Mammary epithelial cell (primary cell): ENCODE measurements at regions of chr15 and their contacts with region 1.

Region 1: DNA sequence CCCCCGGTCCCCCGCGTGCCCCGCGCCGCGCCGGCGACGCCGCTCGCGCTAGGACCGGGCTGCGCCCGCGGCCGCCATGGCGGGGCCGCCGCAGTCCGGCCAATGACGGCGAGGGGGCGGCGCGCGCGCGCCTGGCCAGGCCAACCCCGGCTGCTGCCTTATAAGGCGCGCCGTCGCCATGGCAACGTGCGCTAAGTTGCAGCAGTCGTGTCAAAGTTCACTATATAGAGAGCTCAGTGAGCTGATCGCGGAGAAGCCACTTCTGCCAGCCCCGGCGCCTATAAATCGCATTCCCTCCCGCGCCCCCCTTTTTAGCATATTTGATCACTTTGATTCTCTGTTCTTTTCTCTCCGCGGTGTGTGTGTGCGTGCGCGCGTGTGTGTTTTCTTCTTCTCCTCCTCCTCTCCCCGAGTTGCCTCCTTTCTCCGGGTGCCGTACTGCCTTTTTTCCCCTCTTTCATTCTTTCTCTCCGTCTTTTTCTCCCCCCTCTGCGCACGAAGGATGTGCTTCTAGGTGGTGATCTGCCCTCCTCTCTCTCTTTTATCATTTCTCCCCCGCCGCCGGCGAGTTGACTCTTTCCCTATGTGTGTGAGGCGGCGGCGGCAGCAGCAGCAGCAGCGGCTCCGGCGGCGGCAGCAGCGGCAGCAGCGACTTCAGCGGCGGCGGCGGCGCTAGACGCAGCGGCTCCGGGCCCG is at the start of gene NR2F2:
- DNase-seq: peak; percentile 96
- H3K4me3 ChIP-seq: peak within 1 kb of the TSS; percentile 76 to 96 (median 91)
- H3K27ac ChIP-seq: peak within 1 kb of the TSS; percentile 88
- H3K4me1 ChIP-seq: peaks cover 33% of the 10 kb centered on the region
- H3K27me3 ChIP-seq: no peaks in the 10 kb centered on the region
- CTCF ChIP-seq: no peak
- total RNA-seq, gene NR2F2: 3.2 to 34.1 TPM

Region 2: GRCh38 chr15:95025924-95026728 is 1304.5 kb before region 1 on chr15:
- CTCF ChIA-PET with region 1: no interaction called
- dilution Hi-C with region 1: no loop called
- in situ Hi-C with region 1: loop called in 1 of 2 experiments (anchors 25 kb)
- intact Hi-C with region 1: loop called (anchors 5 kb)
- DNase-seq: peak; percentile 50
- H3K4me3 ChIP-seq: no peak overlapping the region
- H3K27ac ChIP-seq: no peak overlapping the region
- H3K4me1 ChIP-seq: no peaks in the 10 kb centered on the region
- H3K27me3 ChIP-seq: no peaks in the 10 kb centered on the region
- CTCF ChIP-seq: peak; percentile 62 to 80

Region 3: GRCh38 chr15:95557226-95558046 is 773.2 kb before region 1 on chr15:
- CTCF ChIA-PET with region 1: no interaction called
- dilution Hi-C with region 1: no loop called
- in situ Hi-C with region 1: no loop called
- intact Hi-C with region 1: loop called (anchors 5 kb)
- DNase-seq: peak; percentile 90
- H3K4me3 ChIP-seq: no peak overlapping the region
- H3K27ac ChIP-seq: peak overlapping the region; percentile 81
- H3K4me1 ChIP-seq: peaks cover 30% of the 10 kb centered on the region
- H3K27me3 ChIP-seq: no peaks in the 10 kb centered on the region
- CTCF ChIP-seq: no peak

Region 4: DNA sequence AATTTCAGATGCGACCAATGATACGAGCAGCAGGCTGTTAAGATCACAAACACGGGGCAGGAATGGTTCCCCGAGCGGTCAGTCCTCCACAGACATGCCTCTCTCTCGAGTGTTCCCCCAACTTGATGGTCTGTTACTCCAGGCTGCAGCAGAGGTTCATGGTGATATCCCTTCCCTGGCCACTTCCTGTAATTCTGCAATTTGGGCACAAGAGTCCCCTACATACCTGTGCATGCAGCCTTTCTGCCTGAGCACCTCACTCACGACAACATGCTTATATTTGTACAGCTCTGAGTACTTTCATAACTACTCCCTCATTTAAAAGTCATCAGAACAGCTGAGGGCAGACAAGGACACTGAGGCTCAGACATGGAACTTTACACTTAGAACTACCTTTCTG is 408.2 kb before region 1 on chr15:
- CTCF ChIA-PET with region 1: no interaction called
- dilution Hi-C with region 1: no loop called
- in situ Hi-C with region 1: no loop called
- intact Hi-C with region 1: loop called (anchors 2 kb)
- DNase-seq: peak; percentile 31
- H3K4me3 ChIP-seq: no peak overlapping the region
- H3K27ac ChIP-seq: no peak overlapping the region
- H3K4me1 ChIP-seq: no peaks in the 10 kb centered on the region
- H3K27me3 ChIP-seq: no peaks in the 10 kb centered on the region
- CTCF ChIP-seq: peak in 1 of 2 donors; percentile 39

Region 5: GRCh38 chr15:96264801-96265515 is 65.6 kb before region 1 on chr15:
- CTCF ChIA-PET with region 1: interaction called, 15 read pairs
- dilution Hi-C with region 1: no loop called
- in situ Hi-C with region 1: loop called in 1 of 2 experiments (anchors 10 kb)
- intact Hi-C with region 1: no loop called
- DNase-seq: peak; percentile 81
- H3K4me3 ChIP-seq: no peak overlapping the region
- H3K27ac ChIP-seq: peak overlapping the region; percentile 93
- H3K4me1 ChIP-seq: peaks cover 40% of the 10 kb centered on the region
- H3K27me3 ChIP-seq: no peaks in the 10 kb centered on the region
- CTCF ChIP-seq: no peak

Region 6: DNA sequence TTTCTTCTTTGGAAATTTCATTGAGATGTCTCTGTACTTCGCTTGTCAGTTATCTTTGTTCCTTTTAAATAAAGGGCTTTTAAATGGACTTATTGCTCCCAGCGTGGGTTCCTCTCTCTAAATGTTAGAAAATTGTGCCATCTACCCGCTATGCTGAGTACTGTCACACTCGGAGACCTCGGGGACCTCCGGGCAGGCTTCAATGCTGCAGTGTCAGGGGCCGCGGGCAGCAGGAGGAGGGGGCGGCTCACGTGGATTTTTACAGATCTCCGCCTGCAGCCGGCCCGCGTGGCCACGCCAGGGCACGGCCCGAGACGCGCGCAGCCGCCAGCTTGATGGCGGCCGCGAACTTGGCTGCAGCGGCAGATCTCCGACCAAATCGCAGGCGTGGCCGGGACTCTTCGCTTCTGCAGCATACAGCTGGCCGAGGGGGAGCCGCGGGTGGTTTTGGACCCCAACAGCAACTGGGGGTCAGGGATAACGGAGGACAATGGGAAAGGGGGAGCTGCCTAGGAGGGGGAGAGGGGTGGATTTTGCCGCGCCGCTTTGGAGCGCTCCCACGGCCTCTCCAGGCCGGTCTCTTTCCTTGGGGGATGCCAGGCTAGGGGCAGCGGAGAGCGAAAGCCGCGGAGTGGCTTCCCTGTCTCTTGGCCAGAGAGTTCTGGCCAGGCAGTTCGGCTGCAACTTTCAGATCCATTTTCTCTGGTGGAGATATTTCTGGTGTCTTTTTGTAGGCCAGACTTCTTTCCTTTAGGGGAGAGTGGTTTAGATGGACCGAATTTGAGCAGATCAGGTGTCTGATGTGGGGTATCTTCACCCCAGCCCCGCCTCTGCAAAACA is 15.2 kb after region 1 on chr15:
- CTCF ChIA-PET with region 1: interaction called, 3 read pairs
- dilution Hi-C with region 1: no loop called
- in situ Hi-C with region 1: no loop called
- intact Hi-C with region 1: loop called (anchors 1 kb)
- DNase-seq: no peak
- H3K4me3 ChIP-seq: peak overlapping the region; percentile 30 to 47 (median 33)
- H3K27ac ChIP-seq: no peak overlapping the region
- H3K4me1 ChIP-seq: no peaks in the 10 kb centered on the region
- H3K27me3 ChIP-seq: no peaks in the 10 kb centered on the region
- CTCF ChIP-seq: peak; percentile 48 to 66

Region 7: GRCh38 chr15:97234851-97235610 is 904.4 kb after region 1 on chr15:
- CTCF ChIA-PET with region 1: no interaction called
- dilution Hi-C with region 1: no loop called
- in situ Hi-C with region 1: loop called in 1 of 2 experiments (anchors 25 kb)
- intact Hi-C with region 1: loop called (anchors 1 kb)
- DNase-seq: peak; percentile 35
- H3K4me3 ChIP-seq: no peak overlapping the region
- H3K27ac ChIP-seq: no peak overlapping the region
- H3K4me1 ChIP-seq: no peaks in the 10 kb centered on the region
- H3K27me3 ChIP-seq: no peaks in the 10 kb centered on the region
- CTCF ChIP-seq: peak; percentile 87 to 88